ENCODE measurements at regions of chr21 and their contacts with region 1.

Region 1: DNA sequence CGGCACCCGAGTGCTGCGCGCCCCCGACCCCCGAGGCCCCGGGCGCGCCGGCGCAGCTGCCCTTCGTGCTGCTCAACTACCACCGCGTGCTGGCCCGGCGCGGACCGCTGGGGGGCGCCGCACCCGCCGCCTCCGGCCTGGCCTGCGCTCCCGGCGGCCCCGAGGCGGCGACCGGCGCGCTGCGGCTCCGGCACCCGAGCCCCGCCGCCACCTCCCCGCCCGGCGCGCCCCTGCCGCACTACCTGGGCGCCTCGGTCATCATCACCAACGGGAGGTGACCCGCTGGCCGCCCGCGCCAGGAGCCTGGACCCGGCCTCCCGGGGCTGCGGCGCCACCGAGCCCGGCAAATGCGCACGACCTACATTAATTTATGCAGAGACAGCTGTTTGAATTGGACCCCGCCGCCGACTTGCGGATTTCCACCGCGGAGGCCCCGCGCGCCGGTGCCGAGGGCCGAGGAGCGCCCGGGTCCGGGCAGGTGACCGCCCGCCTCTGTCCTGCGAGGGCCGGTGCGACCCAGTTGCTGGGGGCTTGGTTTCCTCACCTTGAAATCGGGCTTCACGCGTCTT is 49.0 kb downstream of the SIM2 start:
- DNase-seq: peak; percentile 39 to 71 (median 62)
- ATAC-seq: peak in 3 of 4 donors; percentile 49 to 77 (median 68)
- H3K4me3 ChIP-seq: peak overlapping the region; percentile 22 to 62 (median 56)
- H3K27ac ChIP-seq: peak overlapping the region in 1 of 12 donors; percentile 33
- H3K4me1 ChIP-seq: peaks cover 0 to 19% (median 5%) of the 10 kb centered on the region in 12 donors
- H3K27me3 ChIP-seq: peaks cover 0 to 29% (median 0%) of the 10 kb centered on the region in 9 donors
- CTCF ChIP-seq: peak in 4 of 12 donors; percentile 9 to 35 (median 26)
- POLR2A ChIP-seq: no peak

Region 2: GRCh38 chr21:36816561-36817130 is 68.7 kb after region 1 on chr21:
- intact Hi-C with region 1: no loop called
- DNase-seq: no peak
- ATAC-seq: no peak
- H3K4me3 ChIP-seq: no peak overlapping the region
- H3K27ac ChIP-seq: no peak overlapping the region
- H3K4me1 ChIP-seq: no peaks in the 10 kb centered on the region
- H3K27me3 ChIP-seq: no peaks in the 10 kb centered on the region
- CTCF ChIP-seq: no peak
- POLR2A ChIP-seq: no peak

Region 3: DNA sequence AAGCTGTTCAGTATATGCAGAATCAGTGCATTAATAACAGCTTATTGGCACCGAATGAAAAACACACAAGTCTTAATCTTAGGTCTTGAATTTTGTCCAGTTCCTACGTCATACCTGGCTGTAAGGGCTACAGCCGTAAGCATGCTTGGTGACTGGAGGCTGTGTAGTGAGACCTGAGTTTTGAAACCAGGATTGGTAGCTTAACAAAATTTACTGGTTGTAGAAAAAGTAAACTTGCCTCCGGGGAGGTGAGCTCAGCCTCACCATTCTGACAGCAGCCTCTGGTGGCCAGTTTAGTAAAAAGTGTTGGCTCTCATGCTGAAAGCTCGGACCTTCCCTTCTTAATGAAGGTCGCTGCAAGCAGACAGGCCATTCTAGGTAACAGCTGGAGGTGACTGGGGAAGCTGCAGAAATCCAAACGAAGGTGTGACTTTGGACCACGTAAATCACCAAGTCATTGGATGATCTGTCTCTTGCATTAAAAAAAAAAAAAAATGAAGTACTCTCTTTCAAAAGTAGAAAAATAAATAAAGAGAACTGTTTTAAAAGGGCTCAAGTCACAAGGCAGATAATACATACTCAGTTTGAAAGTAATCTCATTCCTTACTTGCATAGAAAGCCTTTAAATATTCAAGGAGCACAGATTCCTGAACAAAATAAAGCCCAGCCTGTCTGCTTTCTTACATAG is 169.7 kb after region 1 on chr21:
- intact Hi-C with region 1: loop called in 8 of 10 experiments (anchors 5 to 10 kb)
- DNase-seq: peak in 1 of 5 donors; percentile 30
- ATAC-seq: peak in 3 of 4 donors; percentile 52 to 72 (median 62)
- H3K4me3 ChIP-seq: no peak overlapping the region
- H3K27ac ChIP-seq: no peak overlapping the region
- H3K4me1 ChIP-seq: peaks cover 0 to 15% (median 0%) of the 10 kb centered on the region in 12 donors
- H3K27me3 ChIP-seq: no peaks in the 10 kb centered on the region
- CTCF ChIP-seq: peak; percentile 23 to 68 (median 53)
- POLR2A ChIP-seq: no peak

Measured in heart left ventricle (tissue), 16 donors.